ENCODE measurements at regions of chr2 and their contacts with region 1.

Region 1: GRCh38 chr2:27370026-27370815 is at the starts of genes EIF2B4 and SNX17:
- DNase-seq: peak; percentile 100
- H3K4me3 ChIP-seq: peak within 1 kb of the TSS; percentile 85
- H3K4me3 Mint-ChIP-seq: peak within 1 kb of the TSS; percentile 74
- H3K27ac Mint-ChIP-seq: peak within 1 kb of the TSS; percentile 96
- H3K4me1 ChIP-seq: peaks cover 17% of the 10 kb centered on the region
- H3K4me1 Mint-ChIP-seq: peaks cover 31% of the 10 kb centered on the region
- H3K27me3 ChIP-seq: no peaks in the 10 kb centered on the region
- H3K27me3 Mint-ChIP-seq: no peaks in the 10 kb centered on the region
- CTCF ChIP-seq: peak; percentile 58 to 95
- total RNA-seq, gene EIF2B4: 79.7 and 91.3 TPM in 2 replicates
- total RNA-seq, gene SNX17: 98.7 and 108 TPM in 2 replicates

Region 2: GRCh38 chr2:27086090-27086723 is 284.0 kb before region 1 on chr2:
- CTCF ChIA-PET with region 1: no interaction called
- POLR2A ChIA-PET with region 1: no interaction called
- intact Hi-C with region 1: no loop called
- DNase-seq: peak; percentile 94 to 99
- H3K4me3 ChIP-seq: peak overlapping the region; percentile 86
- H3K4me3 Mint-ChIP-seq: peak overlapping the region; percentile 89
- H3K27ac Mint-ChIP-seq: peak overlapping the region; percentile 66
- H3K4me1 ChIP-seq: peaks cover 7% of the 10 kb centered on the region
- H3K4me1 Mint-ChIP-seq: peaks cover 14% of the 10 kb centered on the region
- H3K27me3 ChIP-seq: no peaks in the 10 kb centered on the region
- H3K27me3 Mint-ChIP-seq: no peaks in the 10 kb centered on the region
- CTCF ChIP-seq: peak; percentile 74 to 88

Region 3: GRCh38 chr2:27320958-27321543 is 49.2 kb before region 1 on chr2:
- CTCF ChIA-PET with region 1: interaction called, 9 read pairs
- POLR2A ChIA-PET with region 1: interaction called, 4 read pairs
- intact Hi-C with region 1: loop called (anchors 1 kb)
- DNase-seq: peak; percentile 91 to 95
- H3K4me3 ChIP-seq: peak overlapping the region; percentile 6; the same call in 1 of the 2 replicates
- H3K4me3 Mint-ChIP-seq: peak overlapping the region; percentile 94
- H3K27ac Mint-ChIP-seq: peak overlapping the region; percentile 99
- H3K4me1 ChIP-seq: peaks cover 19% of the 10 kb centered on the region
- H3K4me1 Mint-ChIP-seq: peaks cover 24% of the 10 kb centered on the region
- H3K27me3 ChIP-seq: no peaks in the 10 kb centered on the region
- H3K27me3 Mint-ChIP-seq: no peaks in the 10 kb centered on the region
- CTCF ChIP-seq: peak; percentile 74

Region 4: GRCh38 chr2:27356382-27357181 is 13.6 kb before region 1 on chr2 and contains the start of gene GTF3C2:
- CTCF ChIA-PET with region 1: interaction called, 12 read pairs
- POLR2A ChIA-PET with region 1: interaction called, 5 read pairs
- intact Hi-C with region 1: loop called (anchors 1 kb)
- DNase-seq: peak; percentile 99
- H3K4me3 ChIP-seq: peak within 1 kb of the TSS; percentile 60
- H3K4me3 Mint-ChIP-seq: peak within 1 kb of the TSS; percentile 92
- H3K27ac Mint-ChIP-seq: peak within 1 kb of the TSS; percentile 98
- H3K4me1 ChIP-seq: peaks cover 24% of the 10 kb centered on the region
- H3K4me1 Mint-ChIP-seq: peaks cover 8% of the 10 kb centered on the region
- H3K27me3 ChIP-seq: no peaks in the 10 kb centered on the region
- H3K27me3 Mint-ChIP-seq: no peaks in the 10 kb centered on the region
- CTCF ChIP-seq: no peak
- total RNA-seq, gene GTF3C2: 81.0 and 91.4 TPM in 2 replicates

Region 5: DNA sequence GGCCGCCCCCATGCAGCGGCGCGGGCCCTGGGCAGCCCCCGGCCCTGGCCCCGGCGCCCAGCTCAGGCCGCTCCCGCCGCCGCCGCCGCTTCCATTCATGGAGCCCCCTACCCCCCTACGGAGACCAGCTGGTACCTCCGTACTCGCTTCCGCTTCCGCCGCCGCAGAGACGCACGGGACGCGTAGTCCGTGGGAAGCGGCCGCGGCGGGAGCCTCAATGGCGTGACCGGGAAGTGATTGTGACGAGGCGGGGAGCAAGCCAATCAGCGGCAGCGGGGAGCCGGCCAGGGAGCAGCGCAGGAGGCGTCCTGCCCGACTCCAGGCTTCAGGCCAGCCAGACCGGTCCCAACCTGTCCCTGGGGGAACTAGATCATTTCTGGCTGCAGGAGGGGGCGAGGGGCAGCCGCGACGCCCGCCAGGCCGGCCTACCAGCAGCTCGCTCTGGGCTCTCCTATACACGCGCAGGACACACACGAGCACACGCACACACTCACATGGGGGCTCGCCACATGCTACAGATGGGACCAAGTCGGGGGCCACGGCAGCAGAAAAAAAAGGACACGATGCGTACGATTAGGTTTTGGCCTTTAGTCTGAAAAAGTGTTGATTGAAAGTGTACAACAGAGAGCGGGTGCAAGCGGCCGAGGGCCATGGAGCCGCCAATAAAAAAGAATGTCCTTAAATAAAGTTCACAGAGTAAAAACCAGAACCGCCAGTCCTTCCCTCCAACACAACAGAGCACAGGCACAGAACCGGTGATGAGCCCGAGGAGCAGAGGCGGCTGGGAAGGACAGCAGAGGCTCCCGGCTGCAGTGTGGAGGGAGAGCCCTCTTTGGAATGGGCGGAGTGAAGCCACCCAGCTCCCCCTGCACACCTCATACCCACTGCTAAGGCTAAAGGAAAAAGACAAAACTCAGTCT is 10.7 kb after region 1 on chr2 and contains the start of gene ZNF513:
- CTCF ChIA-PET with region 1: interaction called, 6 read pairs
- POLR2A ChIA-PET with region 1: interaction called, 10 read pairs
- intact Hi-C with region 1: loop called (anchors 1 kb)
- DNase-seq: peak; percentile 96 to 97
- H3K4me3 ChIP-seq: peak within 1 kb of the TSS; percentile 82
- H3K4me3 Mint-ChIP-seq: peak within 1 kb of the TSS; percentile 85
- H3K27ac Mint-ChIP-seq: peak within 1 kb of the TSS; percentile 98
- H3K4me1 ChIP-seq: peaks cover 15% of the 10 kb centered on the region
- H3K4me1 Mint-ChIP-seq: peaks cover 11% of the 10 kb centered on the region
- H3K27me3 ChIP-seq: no peaks in the 10 kb centered on the region
- H3K27me3 Mint-ChIP-seq: no peaks in the 10 kb centered on the region
- CTCF ChIP-seq: no peak
- total RNA-seq, gene ZNF513: 18.2 and 19.2 TPM in 2 replicates

Region 6: DNA sequence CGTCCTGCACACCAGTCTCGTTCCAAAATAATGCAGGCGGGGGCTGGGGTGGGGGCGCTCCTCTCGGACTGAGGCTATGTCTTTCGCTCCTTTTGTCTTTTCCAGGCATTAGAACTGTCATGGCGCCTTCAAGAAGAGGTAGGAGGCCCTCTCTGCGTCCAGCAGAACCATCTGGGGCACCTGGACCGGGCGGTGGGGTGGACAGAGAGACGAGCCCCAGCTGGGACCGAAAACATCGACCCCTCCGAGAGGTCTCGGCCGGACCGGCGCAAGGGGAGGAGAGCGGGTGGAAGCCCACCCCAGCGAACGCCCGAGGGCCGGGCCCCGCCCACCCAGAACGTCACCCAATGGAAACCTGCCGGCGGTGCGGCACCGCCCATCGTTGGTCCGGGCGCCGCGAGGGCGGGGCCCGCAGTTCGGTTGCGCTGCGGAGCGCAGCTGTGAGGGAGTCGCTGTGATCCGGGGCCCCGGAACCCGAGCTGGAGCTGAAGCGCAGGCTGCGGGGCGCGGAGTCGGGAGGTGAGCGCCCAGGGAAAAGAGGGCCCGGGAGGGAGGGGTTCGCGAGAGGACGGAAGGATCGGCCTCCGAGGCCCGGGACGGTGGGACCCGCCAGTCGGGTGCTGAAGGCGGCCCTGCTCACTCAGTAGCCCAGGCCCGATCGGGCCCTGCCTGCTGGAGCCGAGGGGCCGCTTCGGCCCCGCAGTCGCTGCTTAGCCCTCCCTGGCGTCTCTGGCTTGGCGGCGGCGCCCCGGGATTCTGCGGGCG is 58.2 kb after region 1 on chr2 and contains the start of gene NRBP1:
- CTCF ChIA-PET with region 1: interaction called, 4 read pairs
- POLR2A ChIA-PET with region 1: no interaction called
- intact Hi-C with region 1: loop called (anchors 2 kb)
- DNase-seq: peak; percentile 96 to 98
- H3K4me3 ChIP-seq: peak within 1 kb of the TSS; percentile 92
- H3K4me3 Mint-ChIP-seq: peak within 1 kb of the TSS; percentile 89
- H3K27ac Mint-ChIP-seq: peak within 1 kb of the TSS; percentile 94
- H3K4me1 ChIP-seq: peaks cover 19% of the 10 kb centered on the region
- H3K4me1 Mint-ChIP-seq: peaks cover 6% of the 10 kb centered on the region
- H3K27me3 ChIP-seq: no peaks in the 10 kb centered on the region
- H3K27me3 Mint-ChIP-seq: no peaks in the 10 kb centered on the region
- CTCF ChIP-seq: peak in 1 of 2 experiments; percentile 0
- total RNA-seq, gene NRBP1: 148 and 169 TPM in 2 replicates